Vagina (tissue), 2 donors: ENCODE measurements at regions of chr1 and their contacts with region 1.

Region 1: GRCh38 chr1:7207875-7208646 is 422.8 kb downstream of the CAMTA1 start:
- DNase-seq: no peak
- H3K4me3 ChIP-seq: no peak overlapping the region
- H3K27ac ChIP-seq: no peak overlapping the region
- H3K4me1 ChIP-seq: no peaks in the 10 kb centered on the region
- H3K27me3 ChIP-seq: no peaks in the 10 kb centered on the region
- CTCF ChIP-seq: no peak
- POLR2A ChIP-seq: no peak

Region 2: DNA sequence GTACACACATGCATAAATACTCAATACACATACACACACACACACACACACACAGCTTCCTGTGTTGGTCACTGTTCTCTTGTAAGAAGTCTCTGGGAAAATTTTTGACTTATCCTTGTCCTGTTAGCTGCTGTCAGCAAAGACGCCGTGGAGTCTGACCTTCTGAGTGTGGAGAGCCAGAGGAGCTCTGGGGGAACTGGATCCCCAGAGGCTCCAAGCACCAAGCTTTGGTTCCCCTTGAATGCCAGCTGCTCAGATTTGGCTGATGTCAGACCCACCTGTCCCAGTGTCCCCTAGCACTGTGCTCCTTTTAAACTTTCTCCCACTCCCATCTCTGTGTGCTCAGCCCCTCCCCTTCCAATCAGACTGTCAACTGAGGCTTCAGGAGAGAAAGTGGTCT is 103.7 kb before region 1 on chr1:
- intact Hi-C with region 1: no loop called
- DNase-seq: no peak
- H3K4me3 ChIP-seq: no peak overlapping the region
- H3K27ac ChIP-seq: no peak overlapping the region
- H3K4me1 ChIP-seq: no peaks in the 10 kb centered on the region
- H3K27me3 ChIP-seq: no peaks in the 10 kb centered on the region
- CTCF ChIP-seq: no peak
- POLR2A ChIP-seq: no peak

Region 3: GRCh38 chr1:7418442-7419080 is 210.5 kb after region 1 on chr1:
- intact Hi-C with region 1: loop called (anchors 2 kb)
- DNase-seq: peak; percentile 60 to 70
- H3K4me3 ChIP-seq: no peak overlapping the region
- H3K27ac ChIP-seq: no peak overlapping the region
- H3K4me1 ChIP-seq: no peaks in the 10 kb centered on the region
- H3K27me3 ChIP-seq: no peaks in the 10 kb centered on the region
- CTCF ChIP-seq: no peak
- POLR2A ChIP-seq: no peak